ENCODE measurements at regions of chr17 and their contacts with region 1.

Region 1: DNA sequence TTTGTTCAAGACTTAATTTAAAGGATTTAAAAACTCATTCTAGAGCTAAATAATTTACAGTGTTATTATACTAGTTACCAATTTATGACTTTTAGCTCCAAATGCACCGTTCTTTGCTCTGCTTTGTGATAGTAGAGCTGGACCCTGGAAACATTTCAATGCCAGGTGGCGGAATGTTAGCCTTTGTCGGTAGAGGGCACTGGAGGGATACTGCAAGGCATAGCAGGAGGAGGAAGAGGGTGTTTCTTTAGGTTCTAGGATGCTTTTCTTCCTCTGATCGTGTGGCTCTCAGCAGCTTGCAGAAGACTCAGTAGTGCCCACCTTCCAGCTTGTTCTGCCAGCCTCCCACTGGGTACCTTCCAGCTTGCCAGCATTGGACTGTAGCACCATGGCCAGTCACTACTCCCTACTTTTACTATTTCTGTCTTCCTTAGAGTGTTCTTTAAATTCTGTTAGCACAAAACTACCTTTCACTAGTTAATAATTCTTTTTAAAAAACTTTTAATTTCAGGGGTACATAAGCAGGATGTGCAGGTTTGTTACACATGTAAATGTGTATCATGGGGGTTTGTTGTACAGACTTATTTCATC is 325.3 kb downstream of the UTP18 start:
- DNase-seq: no peak
- ATAC-seq: peak in 1 of 4 donors; percentile 13
- H3K4me3 ChIP-seq: no peak overlapping the region
- H3K27ac ChIP-seq: no peak overlapping the region
- H3K4me1 ChIP-seq: no peaks in the 10 kb centered on the region
- H3K27me3 ChIP-seq: peaks cover 0 to 12% (median 0%) of the 10 kb centered on the region in 9 donors
- CTCF ChIP-seq: peak; percentile 22 to 61 (median 42)
- POLR2A ChIP-seq: no peak

Region 2: GRCh38 chr17:51640108-51640622 is 54.6 kb after region 1 on chr17:
- intact Hi-C with region 1: loop called in 2 of 10 experiments (anchors 5 to 10 kb)
- DNase-seq: no peak
- ATAC-seq: no peak
- H3K4me3 ChIP-seq: no peak overlapping the region
- H3K27ac ChIP-seq: no peak overlapping the region
- H3K4me1 ChIP-seq: no peaks in the 10 kb centered on the region
- H3K27me3 ChIP-seq: peaks cover 0 to 21% (median 6%) of the 10 kb centered on the region in 9 donors
- CTCF ChIP-seq: peak in 9 of 12 donors; percentile 9 to 45 (median 29)
- POLR2A ChIP-seq: no peak

Region 3: DNA sequence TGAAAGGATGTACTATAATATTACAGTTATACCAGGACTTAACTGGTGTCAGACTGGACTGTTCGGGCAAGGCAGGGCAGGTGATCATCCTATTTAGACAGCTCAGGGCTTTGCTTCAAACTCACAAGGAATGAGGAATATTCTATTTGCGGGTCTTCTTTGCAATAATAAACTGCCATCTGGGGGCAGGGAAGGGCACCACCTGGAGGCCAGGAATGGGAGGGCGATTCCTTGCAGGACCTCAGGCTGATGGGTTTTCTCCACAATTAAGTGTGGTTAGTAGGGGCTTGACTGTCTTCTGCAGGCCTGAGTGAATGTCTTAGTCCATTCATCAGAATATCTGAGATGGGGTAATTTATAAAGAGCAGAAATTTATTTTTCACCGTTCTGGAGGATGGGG is 148.9 kb after region 1 on chr17:
- intact Hi-C with region 1: loop called in 3 of 10 experiments (anchors 2 to 10 kb)
- DNase-seq: peak in 1 of 5 donors; percentile 18
- ATAC-seq: no peak
- H3K4me3 ChIP-seq: no peak overlapping the region
- H3K27ac ChIP-seq: no peak overlapping the region
- H3K4me1 ChIP-seq: no peaks in the 10 kb centered on the region
- H3K27me3 ChIP-seq: peaks cover 0 to 13% (median 0%) of the 10 kb centered on the region in 9 donors
- CTCF ChIP-seq: peak in 11 of 12 donors; percentile 8 to 57 (median 30)
- POLR2A ChIP-seq: no peak

Region 4: DNA sequence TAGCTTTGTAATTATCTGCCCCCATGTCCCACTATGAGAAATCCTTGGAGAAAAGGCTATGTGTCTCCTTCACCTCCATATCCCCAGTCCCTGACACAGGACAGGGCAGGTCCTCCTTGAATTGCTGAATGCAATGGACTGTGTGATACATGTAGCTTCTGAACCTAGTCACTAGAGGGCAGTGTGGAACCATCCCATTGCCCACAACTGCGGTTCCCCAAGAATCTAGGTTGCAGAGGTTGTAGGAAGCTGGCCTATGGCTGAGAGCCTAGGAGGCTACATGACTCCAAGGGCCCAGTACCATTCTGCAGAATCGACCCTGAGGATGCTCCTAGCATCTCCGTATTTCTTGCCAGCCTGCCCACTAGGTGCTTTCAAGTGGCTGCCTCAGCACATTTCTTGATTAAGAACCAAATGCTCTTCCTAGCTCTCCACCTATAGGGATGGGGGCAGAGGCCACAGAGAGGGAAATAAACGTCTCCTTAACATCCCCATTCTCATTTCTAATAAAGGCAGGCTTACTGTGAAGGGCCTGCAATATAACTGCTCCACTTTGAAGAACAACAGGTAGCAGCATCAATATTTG is 178.9 kb after region 1 on chr17:
- intact Hi-C with region 1: loop called in 2 of 10 experiments (anchors 10 kb)
- DNase-seq: peak in 3 of 5 donors; percentile 18 to 35 (median 22)
- ATAC-seq: peak in 3 of 4 donors; percentile 70 to 90 (median 72)
- H3K4me3 ChIP-seq: no peak overlapping the region
- H3K27ac ChIP-seq: no peak overlapping the region
- H3K4me1 ChIP-seq: no peaks in the 10 kb centered on the region
- H3K27me3 ChIP-seq: peaks cover 0 to 31% (median 3%) of the 10 kb centered on the region in 9 donors
- CTCF ChIP-seq: peak; percentile 66 to 87 (median 78)
- POLR2A ChIP-seq: no peak

Measured in heart left ventricle (tissue), 16 donors.